H1 (cell line): ENCODE measurements at regions of chr2 and their contacts with region 1.

Region 1: DNA sequence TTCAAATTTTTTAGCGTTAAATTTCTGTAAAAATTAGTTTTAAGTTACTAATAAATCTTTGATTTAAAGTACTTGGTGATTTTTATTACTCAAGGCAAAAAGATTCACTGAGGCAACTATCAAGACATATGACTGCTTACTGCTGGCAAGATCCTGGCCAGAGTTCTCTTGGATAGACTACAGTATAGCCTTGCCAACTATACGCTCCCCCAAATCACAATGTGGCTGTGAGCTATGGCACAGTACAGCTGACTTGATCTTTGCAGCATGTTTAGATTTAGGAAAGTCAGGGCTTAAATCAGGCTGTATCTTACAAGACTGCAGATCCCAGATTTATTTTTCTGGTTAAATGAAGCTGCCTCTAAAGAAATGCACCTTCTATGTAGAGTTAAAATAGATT is 26.5 kb downstream of the MSTN start:
- DNase-seq: no peak
- H3K4me3 ChIP-seq: no peak overlapping the region
- H3K27ac ChIP-seq: no peak overlapping the region
- H3K4me1 ChIP-seq: no peaks in the 10 kb centered on the region
- H3K27me3 ChIP-seq: no peaks in the 10 kb centered on the region
- CTCF ChIP-seq: no peak
- EP300 ChIP-seq: no peak
- POLR2A ChIP-seq: no peak
- RAD21 ChIP-seq: no peak

Region 2: DNA sequence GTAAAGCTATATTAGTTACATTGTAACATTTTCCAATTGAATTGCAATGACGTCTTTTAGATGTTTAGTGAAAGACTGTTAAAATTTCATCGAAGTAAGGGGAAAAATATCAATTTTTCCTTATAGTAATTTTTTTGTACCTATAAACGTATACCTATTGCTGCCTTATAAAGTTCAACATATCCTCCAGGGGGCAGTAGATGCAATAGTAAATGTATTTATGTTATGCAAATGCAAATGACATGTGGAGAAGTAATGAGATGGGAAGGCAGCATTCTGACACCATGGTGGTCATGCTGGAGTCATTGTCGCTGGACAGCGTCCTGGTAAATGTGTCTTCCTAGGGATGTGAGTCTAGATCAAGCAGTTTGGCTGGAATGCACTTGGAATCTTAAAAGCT is 12.2 kb before region 1 on chr2:
- CTCF ChIA-PET with region 1: interaction called, 28 read pairs
- POLR2A ChIA-PET with region 1: no interaction called
- DNase-seq: peak in 1 of 2 experiments; percentile 1
- H3K4me3 ChIP-seq: no peak overlapping the region
- H3K27ac ChIP-seq: no peak overlapping the region
- H3K4me1 ChIP-seq: no peaks in the 10 kb centered on the region
- H3K27me3 ChIP-seq: no peaks in the 10 kb centered on the region
- CTCF ChIP-seq: peak in 1 of 3 experiments; percentile 48; a peak in 2 of 4 replicates
- EP300 ChIP-seq: no peak
- POLR2A ChIP-seq: no peak
- RAD21 ChIP-seq: peak; percentile 27 to 32; a peak in 1 of 4 replicates